Spleen (tissue), 13 donors: ENCODE measurements at regions of chr14 and their contacts with region 1.

Region 1: GRCh38 chr14:74860906-74861733 is 14.8 kb downstream of the PROX2 start:
- DNase-seq: peak; percentile 96
- H3K4me3 ChIP-seq: no peak overlapping the region
- H3K27ac ChIP-seq: no peak overlapping the region
- H3K4me1 ChIP-seq: peaks cover 0 to 28% (median 14%) of the 10 kb centered on the region in 6 donors
- H3K27me3 ChIP-seq: no peaks in the 10 kb centered on the region
- CTCF ChIP-seq: peak; percentile 75 to 95 (median 91)
- POLR2A ChIP-seq: no peak

Region 2: DNA sequence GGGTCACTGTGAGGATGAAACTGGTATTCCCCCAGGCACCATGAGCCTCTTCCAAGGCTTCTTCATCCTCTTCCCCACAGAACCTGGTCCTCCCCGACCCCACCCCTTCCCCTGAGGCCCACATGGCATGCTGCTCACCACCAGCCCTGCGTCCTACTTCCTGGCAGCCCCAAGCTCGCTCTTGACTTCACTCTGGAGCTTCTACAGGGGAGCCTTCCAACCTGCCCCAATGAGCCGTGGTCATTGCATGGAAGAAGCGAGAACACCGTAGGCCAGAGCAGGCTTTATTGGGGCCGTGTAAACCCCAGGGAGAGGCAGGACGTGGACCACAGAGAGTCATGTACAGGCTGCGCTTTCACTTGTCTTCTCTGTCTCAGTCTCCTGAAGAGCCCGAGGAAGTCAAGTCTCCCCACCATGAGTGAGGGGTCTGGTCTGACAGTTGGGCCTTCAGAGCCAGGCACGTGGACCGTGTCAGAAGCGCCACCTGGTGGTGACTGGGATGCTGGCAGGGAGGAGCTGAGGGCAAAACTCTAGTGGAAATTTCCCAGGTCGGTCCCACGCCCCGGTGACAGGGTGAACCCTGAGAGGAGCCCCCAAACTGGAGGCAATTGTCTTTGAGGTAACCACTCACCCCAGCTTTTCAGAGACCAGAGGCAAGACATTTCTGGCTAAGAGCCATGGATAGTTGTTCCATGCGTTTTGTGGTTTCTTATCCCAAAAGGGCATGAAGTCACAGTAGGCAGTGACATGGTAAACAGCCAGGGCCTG is 44.4 kb after region 1 on chr14:
- intact Hi-C with region 1: loop called (anchors 5 kb)
- DNase-seq: peak; percentile 93
- H3K4me3 ChIP-seq: no peak overlapping the region
- H3K27ac ChIP-seq: peak overlapping the region in 4 of 8 donors; percentile 9 to 60 (median 28)
- H3K4me1 ChIP-seq: peaks cover 4 to 52% (median 28%) of the 10 kb centered on the region in 6 donors
- H3K27me3 ChIP-seq: no peaks in the 10 kb centered on the region
- CTCF ChIP-seq: peak; percentile 75 to 97 (median 94)
- POLR2A ChIP-seq: no peak

Region 3: DNA sequence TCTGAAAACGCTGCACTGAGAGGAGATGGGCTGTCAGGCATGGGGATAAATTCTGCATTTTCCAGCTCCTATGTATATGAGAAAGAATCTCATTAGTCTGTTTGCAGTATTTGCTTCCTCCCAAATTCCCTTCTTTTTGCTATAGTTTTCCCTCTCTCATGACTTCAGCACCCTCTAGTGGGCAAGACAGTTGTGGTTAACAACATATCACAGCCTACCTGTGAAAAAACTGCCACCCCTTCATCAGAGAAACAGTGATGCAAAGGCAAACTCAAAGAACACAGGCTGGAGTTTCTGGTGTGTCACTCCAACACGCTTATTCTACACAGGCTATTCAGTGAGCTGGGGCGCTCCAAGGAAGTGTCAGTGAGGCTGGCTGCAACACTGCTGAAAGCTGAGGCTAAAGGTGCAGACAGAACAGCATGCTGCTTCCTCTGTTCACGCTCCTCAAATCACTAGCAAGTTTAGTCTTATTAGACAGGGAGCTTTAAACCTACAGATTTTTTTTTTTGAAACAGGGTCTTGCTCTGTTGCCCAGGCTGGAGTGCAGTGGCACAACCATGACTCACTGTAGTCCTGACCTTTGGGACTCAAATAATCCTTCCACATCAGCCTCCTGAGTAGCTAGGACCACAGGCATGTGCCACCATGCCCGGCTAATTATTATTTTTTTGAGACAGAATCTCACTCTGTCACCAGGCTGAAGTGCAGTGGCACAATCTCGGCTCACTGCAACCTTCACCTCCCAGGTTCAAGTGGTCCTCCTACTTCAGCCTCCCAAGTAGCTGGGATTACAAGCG is 227.7 kb after region 1 on chr14:
- intact Hi-C with region 1: loop called (anchors 10 kb)
- DNase-seq: no peak
- H3K4me3 ChIP-seq: no peak overlapping the region
- H3K27ac ChIP-seq: no peak overlapping the region
- H3K4me1 ChIP-seq: no peaks in the 10 kb centered on the region
- H3K27me3 ChIP-seq: no peaks in the 10 kb centered on the region
- CTCF ChIP-seq: peak in 10 of 11 experiments; percentile 25 to 82 (median 64)
- POLR2A ChIP-seq: no peak